ENCODE measurements at regions of chr3 and their contacts with region 1.

Region 1: DNA sequence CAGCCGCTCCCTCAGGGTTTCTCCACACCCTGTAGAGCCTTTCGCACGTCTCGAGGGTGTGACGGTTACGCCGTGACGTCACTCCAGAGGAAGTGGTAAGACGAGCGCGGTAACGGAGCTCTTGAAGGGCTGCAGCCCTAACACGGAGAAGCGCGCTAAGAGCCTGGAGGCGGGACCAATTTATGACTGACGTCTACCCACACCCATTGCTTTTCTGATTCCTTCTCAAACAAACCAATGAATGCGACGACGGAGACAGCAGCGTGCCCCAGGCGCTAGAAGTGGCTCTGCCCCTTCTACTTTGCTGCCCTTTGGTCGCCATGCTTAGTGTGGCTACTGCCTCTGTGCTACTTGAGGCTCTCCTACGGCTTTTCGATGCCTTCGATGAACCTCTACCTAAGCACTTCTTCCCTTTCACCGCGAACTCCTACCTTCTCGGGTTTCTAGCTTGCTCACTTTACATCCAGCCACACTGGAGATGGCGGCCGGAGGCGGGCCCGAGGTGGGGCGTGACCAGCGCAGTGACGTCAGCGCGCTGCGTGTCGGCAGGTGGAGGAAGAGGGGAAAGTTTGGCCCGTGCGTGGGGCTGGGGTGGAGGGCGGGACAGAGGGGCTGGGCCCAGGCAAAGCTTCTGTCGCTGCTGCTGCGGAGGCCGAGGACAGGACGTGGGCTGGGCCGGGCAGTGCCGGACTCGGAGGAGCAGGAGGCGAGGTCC is at the start of gene OXSR1:
- DNase-seq: peak; percentile 97 to 99 (median 99)
- H3K4me3 ChIP-seq: peak within 1 kb of the TSS; percentile 66 to 72
- H3K4me3 Mint-ChIP-seq: peak within 1 kb of the TSS; percentile 88 to 98 (median 94)
- H3K27ac ChIP-seq: peak within 1 kb of the TSS; percentile 95
- H3K27ac Mint-ChIP-seq: peak within 1 kb of the TSS; percentile 99 to 100 (median 100)
- H3K4me1 ChIP-seq: peaks cover 40% of the 10 kb centered on the region
- H3K4me1 Mint-ChIP-seq: peaks cover 31 to 52% (median 42%) of the 10 kb centered on the region in 4 donors
- H3K27me3 ChIP-seq: no peaks in the 10 kb centered on the region
- H3K27me3 Mint-ChIP-seq: no peaks in the 10 kb centered on the region
- total RNA-seq, gene OXSR1: 39.6 to 43.9 TPM

Region 2: DNA sequence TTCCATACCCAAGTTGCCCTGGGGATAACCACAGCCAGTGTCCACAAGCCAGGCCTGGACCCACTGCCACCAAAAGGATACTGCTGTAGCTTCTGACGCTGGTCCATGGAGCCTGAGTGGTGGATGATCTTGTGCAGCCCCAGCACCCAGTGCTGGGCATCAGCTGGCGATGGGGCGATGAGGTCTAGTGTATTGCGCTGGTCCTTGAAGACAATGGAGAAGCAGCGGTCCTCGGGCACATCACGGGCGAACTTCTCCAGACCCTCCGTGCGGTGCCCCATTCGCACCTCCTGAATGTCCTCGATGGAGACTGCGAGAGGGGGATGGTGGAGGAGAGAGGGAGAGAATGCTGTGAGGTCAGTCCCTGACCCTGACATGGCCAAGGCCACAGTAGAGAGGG is 148.7 kb before region 1 on chr3:
- CTCF ChIA-PET with region 1: no interaction called
- POLR2A ChIA-PET with region 1: no interaction called
- intact Hi-C with region 1: no loop called
- DNase-seq: no peak
- H3K4me3 ChIP-seq: no peak overlapping the region
- H3K4me3 Mint-ChIP-seq: no peak overlapping the region
- H3K27ac ChIP-seq: no peak overlapping the region
- H3K27ac Mint-ChIP-seq: peak overlapping the region in 3 of 7 donors; percentile 27 to 66 (median 29)
- H3K4me1 ChIP-seq: no peaks in the 10 kb centered on the region
- H3K4me1 Mint-ChIP-seq: peaks cover 9 to 13% (median 11%) of the 10 kb centered on the region in 4 donors
- H3K27me3 ChIP-seq: no peaks in the 10 kb centered on the region
- H3K27me3 Mint-ChIP-seq: no peaks in the 10 kb centered on the region

Region 3: DNA sequence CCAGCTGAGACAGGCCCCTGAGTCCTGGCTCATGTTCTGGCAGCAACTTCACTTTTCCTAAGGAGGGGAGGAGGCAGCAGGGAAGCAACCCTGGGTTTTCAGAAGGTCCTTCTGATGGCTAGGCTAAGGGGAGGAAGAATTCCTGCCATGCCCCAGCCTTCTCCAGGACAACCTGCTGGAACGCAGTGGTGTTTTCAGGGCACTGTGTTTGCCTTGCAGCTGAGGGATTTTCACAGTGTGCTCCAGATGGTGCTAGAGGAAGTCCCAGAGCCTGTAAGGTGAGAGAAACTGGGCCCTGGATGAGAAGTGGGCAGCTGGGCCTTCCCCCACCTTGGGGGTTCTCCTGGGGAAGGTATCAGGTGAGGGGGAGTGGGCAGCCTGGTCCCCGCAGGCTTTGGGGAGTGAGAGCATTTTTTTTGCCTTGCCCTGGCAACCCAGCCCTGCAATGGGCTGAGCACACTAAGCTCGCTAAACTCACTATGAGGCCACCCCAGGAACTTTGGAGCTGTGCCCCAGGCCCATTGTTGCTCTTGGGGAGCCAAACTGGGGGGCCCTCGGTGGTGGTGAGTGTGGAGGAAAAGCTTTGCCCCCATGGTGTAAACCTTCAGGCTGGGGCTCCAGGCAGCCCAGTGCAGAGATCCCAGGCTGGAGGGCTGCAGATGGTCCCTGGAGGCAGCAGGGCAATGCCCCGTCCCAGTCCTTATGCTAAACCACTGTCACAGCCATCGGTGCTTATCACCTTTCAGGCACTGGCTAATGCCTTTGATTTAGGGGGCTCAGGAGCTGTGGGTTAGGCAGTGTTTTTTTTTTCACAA is 69.2 kb before region 1 on chr3:
- CTCF ChIA-PET with region 1: no interaction called
- POLR2A ChIA-PET with region 1: no interaction called
- intact Hi-C with region 1: no loop called
- DNase-seq: no peak
- H3K4me3 ChIP-seq: no peak overlapping the region
- H3K4me3 Mint-ChIP-seq: no peak overlapping the region
- H3K27ac ChIP-seq: no peak overlapping the region
- H3K27ac Mint-ChIP-seq: no peak overlapping the region
- H3K4me1 ChIP-seq: no peaks in the 10 kb centered on the region
- H3K4me1 Mint-ChIP-seq: no peaks in the 10 kb centered on the region
- H3K27me3 ChIP-seq: no peaks in the 10 kb centered on the region
- H3K27me3 Mint-ChIP-seq: no peaks in the 10 kb centered on the region

Region 4: GRCh38 chr3:38154033-38154494 is 11.1 kb before region 1 on chr3:
- CTCF ChIA-PET with region 1: interaction called, 6 read pairs
- POLR2A ChIA-PET with region 1: interaction called, 45 read pairs
- intact Hi-C with region 1: loop called (anchors 1 kb)
- DNase-seq: no peak
- H3K4me3 ChIP-seq: no peak overlapping the region
- H3K4me3 Mint-ChIP-seq: no peak overlapping the region
- H3K27ac ChIP-seq: no peak overlapping the region
- H3K27ac Mint-ChIP-seq: no peak overlapping the region
- H3K4me1 ChIP-seq: peaks cover 23% of the 10 kb centered on the region
- H3K4me1 Mint-ChIP-seq: peaks cover 17 to 28% (median 21%) of the 10 kb centered on the region in 4 donors
- H3K27me3 ChIP-seq: no peaks in the 10 kb centered on the region
- H3K27me3 Mint-ChIP-seq: no peaks in the 10 kb centered on the region

Measured in CD4-positive, alpha-beta memory T cell (primary cell).